Activated CD4-positive, alpha-beta memory T cell treated with anti-CD3 and anti-CD28 coated beads for 36 hours (primary cell): ENCODE measurements at regions of chr13 and their contacts with region 1.

Region 1: DNA sequence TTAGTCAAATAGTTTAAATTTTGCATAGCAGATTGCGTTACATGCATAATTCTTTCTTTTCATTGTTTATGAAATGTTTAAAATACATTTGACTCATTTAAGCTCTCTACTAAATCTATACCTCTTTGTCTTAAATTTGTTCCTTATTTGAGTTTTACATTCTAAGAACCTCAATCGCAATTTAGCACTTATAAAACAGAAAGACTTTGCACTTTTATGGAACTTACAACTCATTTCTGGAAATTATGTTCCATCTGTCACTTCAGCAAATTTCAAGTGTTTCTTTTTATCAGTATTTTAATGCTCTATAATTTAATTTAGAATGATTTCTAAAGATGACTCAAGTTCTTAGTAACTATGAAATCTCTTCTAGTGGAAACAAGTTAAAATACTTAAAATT is 1505.8 kb upstream of the SPRY2 start:
- DNase-seq: no peak
- H3K4me3 Mint-ChIP-seq: no peak overlapping the region
- H3K27ac Mint-ChIP-seq: no peak overlapping the region
- H3K4me1 Mint-ChIP-seq: no peaks in the 10 kb centered on the region
- H3K27me3 Mint-ChIP-seq: no peaks in the 10 kb centered on the region

Region 2: DNA sequence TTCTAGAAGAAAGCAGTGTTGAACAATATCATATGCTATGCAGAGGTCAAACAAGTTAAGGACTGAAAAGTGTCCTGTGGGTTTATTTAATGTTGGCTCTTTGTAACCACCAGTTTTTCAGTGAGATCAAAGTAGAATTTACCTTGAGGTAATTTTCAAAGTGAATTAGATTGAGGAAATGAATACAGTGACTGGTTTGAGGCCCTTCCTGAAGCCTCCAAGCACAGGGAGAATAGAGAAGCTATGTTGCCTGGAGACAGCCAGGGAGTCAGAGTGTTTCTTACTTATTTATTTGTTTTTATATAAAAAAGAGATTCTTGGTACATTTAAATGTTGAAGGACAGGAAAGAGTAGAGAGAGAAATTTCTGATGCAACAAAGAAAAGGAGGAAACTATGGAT is 551.6 kb before region 1 on chr13:
- CTCF ChIA-PET with region 1: no interaction called
- POLR2A ChIA-PET with region 1: no interaction called
- intact Hi-C with region 1: loop called (anchors 5 kb)
- DNase-seq: no peak
- H3K4me3 Mint-ChIP-seq: no peak overlapping the region
- H3K27ac Mint-ChIP-seq: no peak overlapping the region
- H3K4me1 Mint-ChIP-seq: no peaks in the 10 kb centered on the region
- H3K27me3 Mint-ChIP-seq: no peaks in the 10 kb centered on the region

Region 3: DNA sequence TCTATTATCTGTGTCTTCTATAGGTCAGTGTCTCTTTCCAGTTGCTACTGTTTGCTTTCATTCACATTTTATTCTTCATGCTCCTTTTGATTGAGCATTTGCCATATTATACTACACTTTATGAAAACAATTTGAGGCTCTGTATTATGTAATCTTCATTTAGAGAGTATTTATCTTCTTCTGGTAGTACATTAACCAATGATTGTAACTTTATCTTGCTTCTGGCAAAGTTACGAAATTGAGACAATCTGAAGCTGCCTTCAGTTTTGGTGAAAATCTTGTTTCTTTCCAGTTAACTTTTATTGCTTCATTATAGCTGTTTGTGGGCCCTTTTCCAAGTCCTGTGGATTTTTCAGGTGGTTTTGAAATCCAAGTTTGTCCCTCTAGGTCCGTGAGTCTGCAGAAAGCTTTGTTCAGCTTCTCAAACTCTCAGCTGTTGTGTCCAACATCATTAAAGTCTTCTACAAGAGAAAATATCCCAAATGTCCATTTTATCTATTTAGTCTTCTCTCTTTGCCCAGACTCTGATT is 250.5 kb before region 1 on chr13:
- CTCF ChIA-PET with region 1: no interaction called
- POLR2A ChIA-PET with region 1: no interaction called
- intact Hi-C with region 1: no loop called
- DNase-seq: no peak
- H3K4me3 Mint-ChIP-seq: no peak overlapping the region
- H3K27ac Mint-ChIP-seq: no peak overlapping the region
- H3K4me1 Mint-ChIP-seq: no peaks in the 10 kb centered on the region
- H3K27me3 Mint-ChIP-seq: no peaks in the 10 kb centered on the region